HepG2 (cell line): ENCODE measurements at regions of chr6 and their contacts with region 1.

Region 1: DNA sequence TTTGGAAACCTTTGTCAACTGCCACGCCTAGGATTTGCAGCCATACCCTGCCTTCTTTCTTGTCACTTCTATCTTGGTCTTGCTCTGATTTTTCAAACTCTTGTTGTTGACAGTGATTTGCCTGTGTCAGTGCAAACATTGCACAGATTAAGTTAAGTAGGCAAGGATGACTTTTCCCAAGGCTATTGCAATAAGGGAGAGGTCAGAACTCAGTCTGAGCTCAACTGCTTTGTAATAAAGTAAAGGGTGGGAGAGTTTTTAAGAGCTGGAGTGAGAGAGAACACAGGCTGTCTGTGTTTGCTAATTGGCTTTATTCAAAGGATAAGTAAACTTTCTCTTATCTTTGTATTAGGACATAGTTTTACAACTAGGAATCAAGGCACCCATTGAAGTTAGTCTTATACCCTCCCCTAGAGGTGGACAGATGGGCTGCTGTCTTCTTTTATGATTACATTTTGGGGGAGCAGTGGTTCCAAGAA is 448.6 kb downstream of the PHF3 start:
- DNase-seq: peak; percentile 86
- ATAC-seq: peak; percentile 95
- H3K4me3 ChIP-seq: no peak overlapping the region
- H3K27ac ChIP-seq: no peak overlapping the region
- H3K4me1 ChIP-seq: peaks cover 18% of the 10 kb centered on the region
- H3K27me3 ChIP-seq: peaks cover 0 to 5% of the 10 kb centered on the region in 2 experiments; a peak in 1 of 5 replicates
- CTCF ChIP-seq: peak; percentile 52
- EP300 ChIP-seq: peak in 1 of 2 experiments; percentile 58; a peak in 1 of 4 replicates
- POLR2A ChIP-seq: no peak
- RAD21 ChIP-seq: no peak

Region 2: GRCh38 chr6:64049736-64050135 is 34.5 kb before region 1 on chr6:
- CTCF ChIA-PET with region 1: no interaction called
- POLR2A ChIA-PET with region 1: no interaction called
- in situ Hi-C with region 1: no loop called
- intact Hi-C with region 1: loop called (anchors 5 kb)
- DNase-seq: no peak
- ATAC-seq: no peak
- H3K4me3 ChIP-seq: no peak overlapping the region
- H3K27ac ChIP-seq: no peak overlapping the region
- H3K4me1 ChIP-seq: peaks cover 29% of the 10 kb centered on the region
- H3K27me3 ChIP-seq: no peaks in the 10 kb centered on the region
- CTCF ChIP-seq: no peak
- EP300 ChIP-seq: no peak
- POLR2A ChIP-seq: no peak
- RAD21 ChIP-seq: no peak

Region 3: GRCh38 chr6:64062960-64063683 is 21.1 kb before region 1 on chr6:
- CTCF ChIA-PET with region 1: no interaction called
- POLR2A ChIA-PET with region 1: no interaction called
- in situ Hi-C with region 1: no loop called
- intact Hi-C with region 1: no loop called
- DNase-seq: no peak
- ATAC-seq: no peak
- H3K4me3 ChIP-seq: no peak overlapping the region
- H3K27ac ChIP-seq: no peak overlapping the region
- H3K4me1 ChIP-seq: no peaks in the 10 kb centered on the region
- H3K27me3 ChIP-seq: no peaks in the 10 kb centered on the region
- CTCF ChIP-seq: no peak
- EP300 ChIP-seq: 0 out of 4 replicates have a peak, but pooled peaks of 1 of the 2 experiments have one; percentile 6
- POLR2A ChIP-seq: no peak
- RAD21 ChIP-seq: no peak